Activated CD8-positive, alpha-beta memory T cell treated with anti-CD3 and anti-CD28 coated beads, Interleukin-2, amount 10 ng/mL, durations not matched to agents 7 days and 5 days (primary cell): ENCODE measurements at regions of chr11 and their contacts with region 1.

Region 1: GRCh38 chr11:117817368-117818040 is 7.0 kb downstream of the FXYD2 start:
- DNase-seq: peak; percentile 93
- ATAC-seq: peak; percentile 43
- H3K4me3 Mint-ChIP-seq: peak overlapping the region; percentile 40
- H3K27ac Mint-ChIP-seq: peak overlapping the region; percentile 98
- H3K4me1 Mint-ChIP-seq: peaks cover 69% of the 10 kb centered on the region
- H3K27me3 Mint-ChIP-seq: no peaks in the 10 kb centered on the region

Region 2: GRCh38 chr11:117426269-117426685 is 391.2 kb before region 1 on chr11:
- CTCF ChIA-PET with region 1: interaction called, 43 read pairs
- DNase-seq: peak; percentile 78
- ATAC-seq: peak; percentile 71
- H3K4me3 Mint-ChIP-seq: no peak overlapping the region
- H3K27ac Mint-ChIP-seq: no peak overlapping the region
- H3K4me1 Mint-ChIP-seq: peaks cover 8% of the 10 kb centered on the region
- H3K27me3 Mint-ChIP-seq: peaks cover 3% of the 10 kb centered on the region

Region 3: GRCh38 chr11:117497206-117497951 is 320.1 kb before region 1 on chr11:
- CTCF ChIA-PET with region 1: no interaction called
- DNase-seq: no peak
- ATAC-seq: no peak
- H3K4me3 Mint-ChIP-seq: no peak overlapping the region
- H3K27ac Mint-ChIP-seq: no peak overlapping the region
- H3K4me1 Mint-ChIP-seq: no peaks in the 10 kb centered on the region
- H3K27me3 Mint-ChIP-seq: peaks cover 6% of the 10 kb centered on the region

Region 4: GRCh38 chr11:117734601-117735024 is 82.9 kb before region 1 on chr11:
- CTCF ChIA-PET with region 1: no interaction called
- DNase-seq: no peak
- ATAC-seq: no peak
- H3K4me3 Mint-ChIP-seq: no peak overlapping the region
- H3K27ac Mint-ChIP-seq: no peak overlapping the region
- H3K4me1 Mint-ChIP-seq: peaks cover 24% of the 10 kb centered on the region
- H3K27me3 Mint-ChIP-seq: peaks cover 9% of the 10 kb centered on the region

Region 5: DNA sequence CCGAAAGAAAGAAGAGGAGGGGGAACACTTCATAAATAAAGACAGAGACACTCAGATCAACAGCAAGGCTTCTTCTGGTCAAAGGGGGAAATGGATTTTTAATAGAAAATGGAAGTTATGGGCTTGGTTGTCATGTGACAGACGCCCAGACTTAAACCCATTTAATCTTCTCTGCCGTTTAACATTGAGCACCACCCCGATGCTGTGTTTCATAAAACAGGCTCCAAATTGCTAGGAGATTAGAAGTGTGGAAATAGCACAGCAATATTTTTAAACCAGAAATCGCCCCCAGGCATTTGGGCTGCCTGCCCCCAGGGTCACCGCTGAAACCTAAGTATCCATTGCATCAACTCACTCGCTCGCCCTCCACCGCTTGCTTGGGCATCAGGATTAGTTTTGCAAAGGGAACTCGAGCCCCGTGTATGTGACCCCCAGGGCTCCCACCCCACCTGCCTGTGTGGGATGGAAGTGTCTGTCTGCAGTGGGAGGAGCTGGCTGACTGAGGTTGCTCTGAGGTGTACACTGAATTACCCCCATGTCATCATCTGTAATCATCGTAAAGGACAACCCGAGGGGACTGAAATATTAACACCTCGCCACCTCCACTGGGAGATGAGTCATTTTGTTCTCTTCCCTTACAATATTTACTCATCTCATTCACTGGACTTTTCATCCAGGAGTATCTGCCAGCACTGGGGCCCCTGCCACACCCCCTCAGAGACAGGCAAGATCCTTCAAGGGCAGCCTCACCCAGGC is 31.2 kb before region 1 on chr11:
- CTCF ChIA-PET with region 1: no interaction called
- DNase-seq: no peak
- ATAC-seq: no peak
- H3K4me3 Mint-ChIP-seq: no peak overlapping the region
- H3K27ac Mint-ChIP-seq: no peak overlapping the region
- H3K4me1 Mint-ChIP-seq: no peaks in the 10 kb centered on the region
- H3K27me3 Mint-ChIP-seq: peaks cover 41% of the 10 kb centered on the region

Region 6: GRCh38 chr11:117828611-117829368 is 11.3 kb after region 1 on chr11:
- CTCF ChIA-PET with region 1: interaction called, 78 read pairs
- DNase-seq: peak; percentile 96
- ATAC-seq: peak; percentile 94
- H3K4me3 Mint-ChIP-seq: no peak overlapping the region
- H3K27ac Mint-ChIP-seq: peak overlapping the region; percentile 85
- H3K4me1 Mint-ChIP-seq: peaks cover 72% of the 10 kb centered on the region
- H3K27me3 Mint-ChIP-seq: no peaks in the 10 kb centered on the region

Region 7: DNA sequence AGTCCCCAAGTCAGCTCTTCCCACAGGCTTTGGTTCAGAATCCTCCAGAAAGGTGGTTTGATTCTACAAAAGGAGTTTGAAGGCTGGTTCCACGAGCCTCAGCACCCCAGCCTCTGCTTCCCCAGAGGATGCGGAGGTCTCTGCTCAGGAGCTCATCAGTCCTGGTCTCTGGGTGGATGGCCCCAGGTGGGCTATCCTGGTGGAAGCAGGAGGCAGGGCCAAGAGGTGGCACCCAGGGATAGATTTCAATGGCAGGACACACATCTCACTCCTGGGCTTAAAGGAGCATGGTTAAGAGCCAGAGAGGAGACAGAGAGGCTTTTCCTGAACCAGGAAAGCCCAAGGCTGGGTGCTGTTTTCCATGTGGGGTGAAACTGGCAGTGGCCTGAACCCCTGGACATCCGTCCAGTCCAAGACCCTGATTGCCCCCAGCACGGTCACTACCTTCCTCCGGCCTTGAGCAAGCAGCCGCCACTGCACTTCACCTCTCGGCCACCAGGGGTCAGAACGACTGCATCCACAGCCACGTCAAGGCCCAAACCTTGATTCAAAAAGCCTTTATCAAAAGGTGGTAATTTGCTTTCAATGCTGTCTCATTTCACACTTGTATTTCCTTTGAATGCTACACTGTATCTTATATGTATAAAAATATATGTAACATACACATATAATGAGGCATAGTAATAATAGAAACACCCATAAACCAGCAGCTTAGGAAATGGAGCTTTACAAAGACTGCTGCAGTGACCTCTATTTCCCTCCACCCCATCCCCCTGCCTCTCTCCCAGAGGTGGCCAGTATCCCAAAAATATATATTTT is 26.4 kb after region 1 on chr11:
- CTCF ChIA-PET with region 1: interaction called, 11 read pairs
- DNase-seq: peak; percentile 87
- ATAC-seq: peak; percentile 86
- H3K4me3 Mint-ChIP-seq: no peak overlapping the region
- H3K27ac Mint-ChIP-seq: no peak overlapping the region
- H3K4me1 Mint-ChIP-seq: peaks cover 7% of the 10 kb centered on the region
- H3K27me3 Mint-ChIP-seq: peaks cover 14% of the 10 kb centered on the region

Region 8: DNA sequence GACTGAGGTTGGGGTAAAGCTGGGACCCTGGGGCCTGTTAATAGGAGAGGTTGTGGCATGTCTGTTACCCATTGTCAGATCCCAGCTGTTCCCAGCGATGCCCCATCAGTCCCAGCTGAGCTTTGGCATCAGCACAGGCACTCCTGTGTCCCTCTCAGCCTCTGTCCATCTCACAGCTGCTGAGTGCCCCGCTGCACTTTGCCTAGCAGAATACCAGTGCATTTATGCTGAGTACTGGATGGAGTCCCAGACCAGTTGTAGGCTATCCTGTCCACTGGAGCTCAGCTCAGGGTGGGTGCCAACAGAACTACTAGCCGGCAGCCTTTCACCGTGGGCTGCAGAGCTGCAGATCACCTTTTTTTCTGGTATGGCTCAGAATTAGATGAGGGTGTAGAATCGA is 49.0 kb after region 1 on chr11:
- CTCF ChIA-PET with region 1: no interaction called
- DNase-seq: no peak
- ATAC-seq: no peak
- H3K4me3 Mint-ChIP-seq: no peak overlapping the region
- H3K27ac Mint-ChIP-seq: no peak overlapping the region
- H3K4me1 Mint-ChIP-seq: peaks cover 7% of the 10 kb centered on the region
- H3K27me3 Mint-ChIP-seq: peaks cover 36% of the 10 kb centered on the region

Region 9: DNA sequence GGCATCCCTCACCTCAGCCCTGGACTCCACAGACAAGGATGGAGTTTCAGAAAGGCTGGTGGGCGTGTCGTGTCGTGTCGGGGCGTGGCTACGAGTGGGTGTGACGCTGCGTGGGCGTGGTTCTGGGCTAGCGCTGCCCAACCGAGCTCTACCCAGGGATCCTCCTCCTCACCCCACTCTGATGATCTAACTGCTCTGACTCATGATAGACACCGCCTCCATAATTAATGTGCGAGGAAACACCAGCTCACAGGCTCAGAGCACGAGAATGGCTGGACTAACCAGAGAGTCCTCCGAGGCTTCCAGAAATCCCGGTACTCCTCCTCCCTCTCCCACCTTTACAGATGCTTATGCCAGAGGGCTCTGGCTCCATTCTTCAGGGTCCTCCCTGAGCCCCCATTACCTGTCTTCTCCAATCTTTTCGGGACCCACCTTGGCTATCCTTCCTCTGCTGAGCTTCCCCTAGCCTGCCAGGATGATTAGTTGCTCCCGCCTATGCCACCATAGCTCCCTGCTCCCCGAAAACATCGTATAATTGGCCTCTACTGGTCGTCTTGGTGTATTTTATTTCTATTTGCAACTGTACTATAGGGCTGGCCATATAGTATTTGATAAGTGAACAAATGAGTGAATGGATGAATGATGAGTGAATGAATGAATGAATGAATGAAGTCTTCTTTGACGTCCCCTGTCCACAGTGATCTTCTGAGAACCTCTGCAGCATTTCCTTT is 89.9 kb after region 1 on chr11:
- CTCF ChIA-PET with region 1: interaction called, 12 read pairs
- DNase-seq: peak; percentile 84
- ATAC-seq: peak; percentile 97
- H3K4me3 Mint-ChIP-seq: peak overlapping the region; percentile 29
- H3K27ac Mint-ChIP-seq: peak overlapping the region; percentile 65
- H3K4me1 Mint-ChIP-seq: peaks cover 19% of the 10 kb centered on the region
- H3K27me3 Mint-ChIP-seq: no peaks in the 10 kb centered on the region

Region 10: DNA sequence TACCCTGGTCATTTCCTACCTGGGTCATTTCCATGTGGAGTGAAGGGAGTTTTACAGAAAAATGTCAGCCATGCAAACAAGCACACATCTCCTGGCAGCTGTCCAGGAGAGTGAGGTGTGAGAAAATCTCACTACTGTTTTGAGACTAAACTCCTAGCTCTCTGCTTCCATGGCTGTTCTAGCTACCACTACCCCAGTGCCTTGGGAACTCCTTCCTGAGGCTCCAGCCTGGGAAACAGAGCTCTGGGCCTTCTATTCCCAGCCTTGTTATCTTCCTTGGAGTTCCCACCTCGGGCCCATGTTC is 114.5 kb after region 1 on chr11:
- CTCF ChIA-PET with region 1: interaction called, 13 read pairs
- DNase-seq: peak; percentile 71
- ATAC-seq: no peak
- H3K4me3 Mint-ChIP-seq: no peak overlapping the region
- H3K27ac Mint-ChIP-seq: peak overlapping the region; percentile 95
- H3K4me1 Mint-ChIP-seq: peaks cover 81% of the 10 kb centered on the region
- H3K27me3 Mint-ChIP-seq: peaks cover 7% of the 10 kb centered on the region

Region 11: GRCh38 chr11:118002541-118003423 is 185.3 kb after region 1 on chr11:
- CTCF ChIA-PET with region 1: interaction called, 15 read pairs
- DNase-seq: peak; percentile 85
- ATAC-seq: peak; percentile 53
- H3K4me3 Mint-ChIP-seq: peak overlapping the region; percentile 54
- H3K27ac Mint-ChIP-seq: peak overlapping the region; percentile 98
- H3K4me1 Mint-ChIP-seq: peaks cover 100% of the 10 kb centered on the region
- H3K27me3 Mint-ChIP-seq: no peaks in the 10 kb centered on the region